ENCODE measurements at regions of chr11 and their contacts with region 1.

Region 1: GRCh38 chr11:13772223-13773046 is 104.0 kb downstream of the FAR1 start:
- DNase-seq: no peak
- H3K4me3 ChIP-seq: no peak overlapping the region
- H3K27ac ChIP-seq: no peak overlapping the region
- H3K4me1 ChIP-seq: peaks cover 0 to 4% (median 0%) of the 10 kb centered on the region in 6 donors
- H3K27me3 ChIP-seq: peaks cover 0 to 9% (median 0%) of the 10 kb centered on the region in 7 donors
- CTCF ChIP-seq: peak in 6 of 11 experiments; percentile 15 to 50 (median 45)
- POLR2A ChIP-seq: no peak

Region 2: DNA sequence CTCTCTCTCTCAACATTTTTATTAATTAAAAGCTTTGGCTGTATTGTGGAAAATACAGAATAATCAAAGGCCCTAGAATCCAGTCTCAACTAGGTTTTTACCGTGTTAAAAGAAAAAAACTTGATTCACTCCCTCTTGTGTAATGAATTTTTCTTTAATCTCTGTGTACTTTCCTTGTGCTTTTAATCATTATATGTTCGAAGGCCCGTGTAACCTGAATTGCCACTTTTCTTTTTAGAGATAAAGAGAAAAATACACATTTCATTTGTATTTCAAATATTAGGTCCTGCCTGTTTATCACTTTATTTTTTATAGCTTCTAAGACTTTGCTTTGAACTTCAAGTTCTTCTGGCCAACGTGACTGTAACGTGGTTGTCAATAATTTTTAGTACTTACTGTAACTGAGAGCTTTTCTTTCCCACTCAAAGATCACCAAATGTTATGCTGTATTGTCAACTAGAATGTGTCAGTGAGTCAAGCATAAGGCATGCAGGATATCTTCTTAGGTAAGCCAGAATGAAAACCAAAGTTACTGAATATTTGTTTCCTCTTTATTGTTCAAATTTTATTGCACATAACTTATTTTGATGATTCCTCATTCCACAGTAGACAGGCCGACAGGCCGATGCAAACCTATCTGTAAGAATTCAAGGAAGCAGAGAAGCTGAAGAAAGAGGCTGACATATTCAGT is 127.3 kb before region 1 on chr11:
- intact Hi-C with region 1: no loop called
- DNase-seq: no peak
- H3K4me3 ChIP-seq: no peak overlapping the region
- H3K27ac ChIP-seq: no peak overlapping the region
- H3K4me1 ChIP-seq: no peaks in the 10 kb centered on the region
- H3K27me3 ChIP-seq: peaks cover 0 to 16% (median 0%) of the 10 kb centered on the region in 7 donors
- CTCF ChIP-seq: no peak
- POLR2A ChIP-seq: no peak

Region 3: GRCh38 chr11:13721760-13722159 is 50.7 kb before region 1 on chr11:
- intact Hi-C with region 1: no loop called
- DNase-seq: no peak
- H3K4me3 ChIP-seq: no peak overlapping the region
- H3K27ac ChIP-seq: no peak overlapping the region
- H3K4me1 ChIP-seq: no peaks in the 10 kb centered on the region
- H3K27me3 ChIP-seq: no peaks in the 10 kb centered on the region
- CTCF ChIP-seq: no peak
- POLR2A ChIP-seq: no peak

Region 4: GRCh38 chr11:14148653-14149273 is 376.3 kb after region 1 on chr11:
- intact Hi-C with region 1: loop called (anchors 5 kb)
- DNase-seq: no peak
- H3K4me3 ChIP-seq: no peak overlapping the region
- H3K27ac ChIP-seq: no peak overlapping the region
- H3K4me1 ChIP-seq: no peaks in the 10 kb centered on the region
- H3K27me3 ChIP-seq: no peaks in the 10 kb centered on the region
- CTCF ChIP-seq: peak in 10 of 11 experiments; percentile 12 to 58 (median 40)
- POLR2A ChIP-seq: no peak

Region 5: DNA sequence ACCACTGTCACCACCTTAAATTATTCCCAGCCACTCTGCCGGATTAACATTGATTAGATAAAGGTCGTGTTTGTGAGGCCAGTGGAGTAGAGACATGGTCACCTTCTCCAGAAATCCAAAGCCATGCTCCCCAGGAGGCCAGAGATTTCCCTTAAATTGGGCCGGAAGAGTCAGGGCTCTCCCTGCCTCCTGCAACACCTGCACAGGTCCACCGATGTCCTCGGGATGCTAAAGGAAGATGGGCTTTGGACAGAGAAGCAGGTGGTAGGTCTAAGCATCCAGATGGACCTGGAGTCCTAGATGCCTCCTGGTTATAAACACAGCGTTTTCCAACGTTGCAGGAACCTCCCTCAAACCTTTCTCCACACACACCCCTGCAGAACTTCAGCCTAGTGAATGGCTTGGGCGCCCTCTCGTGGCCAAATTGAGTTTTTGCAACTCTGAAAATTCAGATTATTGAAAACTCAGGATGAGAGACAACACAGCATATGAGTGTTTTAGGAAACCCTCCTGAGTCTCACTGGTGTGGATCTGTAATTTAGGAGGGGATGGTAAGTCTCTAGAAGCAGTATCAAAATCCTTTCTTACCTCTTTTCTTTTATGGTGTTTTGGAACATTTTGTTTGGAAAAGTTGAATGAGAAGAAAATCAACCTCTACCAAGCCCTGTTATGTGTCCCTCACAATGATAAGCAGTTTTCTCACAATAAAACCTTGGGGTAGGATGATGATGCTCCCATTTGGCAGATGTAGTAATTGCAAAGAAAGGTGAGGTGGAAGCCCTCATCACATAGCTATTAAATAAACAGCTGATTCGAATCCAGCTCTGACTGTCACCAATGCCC is 476.9 kb after region 1 on chr11:
- intact Hi-C with region 1: loop called (anchors 5 kb)
- DNase-seq: peak; percentile 86
- H3K4me3 ChIP-seq: peak overlapping the region in 1 of 8 donors; percentile 36
- H3K27ac ChIP-seq: no peak overlapping the region
- H3K4me1 ChIP-seq: peaks cover 9 to 26% (median 16%) of the 10 kb centered on the region in 6 donors
- H3K27me3 ChIP-seq: peaks cover 0 to 35% (median 0%) of the 10 kb centered on the region in 7 donors
- CTCF ChIP-seq: peak; percentile 57 to 86 (median 78)
- POLR2A ChIP-seq: no peak

Measured in spleen (tissue), 13 donors.